Panc1 (cell line): ENCODE measurements at regions of chr9 and their contacts with region 1.

Region 1: DNA sequence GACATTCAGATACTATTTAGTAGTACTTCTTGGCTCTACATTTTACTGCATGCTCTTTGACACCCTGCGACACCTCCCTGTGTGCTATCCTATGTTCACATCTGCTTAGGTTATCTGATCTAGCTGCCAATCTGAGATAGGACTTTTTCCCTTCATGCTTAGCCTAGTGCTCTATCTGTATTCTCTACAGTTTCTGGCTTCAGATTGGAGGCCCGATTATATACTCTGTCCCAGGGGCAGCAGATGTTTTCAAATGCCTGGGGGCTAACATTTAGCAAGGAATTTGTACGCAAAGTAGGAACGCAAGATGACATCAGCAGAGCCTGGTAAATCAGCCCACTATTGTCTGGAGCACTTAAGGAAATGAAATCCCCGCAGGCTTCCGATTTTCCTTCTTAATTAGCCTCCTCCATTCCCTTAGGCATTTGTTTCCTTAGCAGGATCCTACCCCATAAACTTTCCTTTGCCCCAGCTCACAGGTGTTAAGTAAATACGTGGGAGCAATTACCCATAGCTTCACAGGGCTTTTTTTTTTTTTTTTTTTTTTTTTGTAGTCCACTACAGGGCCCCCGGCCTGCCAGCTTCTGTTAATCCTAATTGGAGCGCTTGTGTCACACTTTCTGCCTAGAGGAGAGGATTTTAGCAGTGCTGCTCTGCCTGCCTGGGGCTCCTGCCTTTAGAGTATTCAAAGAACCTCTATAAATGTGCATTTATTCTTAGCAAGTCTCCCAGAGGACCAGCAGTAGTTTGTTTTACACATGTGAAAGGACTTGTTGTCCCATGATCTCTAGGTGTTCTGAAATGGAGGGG is 61.1 kb upstream of the LPAR1 start:
- DNase-seq: no peak
- ATAC-seq: no peak
- H3K4me3 ChIP-seq: no peak overlapping the region
- H3K27ac ChIP-seq: no peak overlapping the region
- H3K4me1 ChIP-seq: no peaks in the 10 kb centered on the region
- H3K27me3 ChIP-seq: no peaks in the 10 kb centered on the region
- CTCF ChIP-seq: no peak

Region 2: DNA sequence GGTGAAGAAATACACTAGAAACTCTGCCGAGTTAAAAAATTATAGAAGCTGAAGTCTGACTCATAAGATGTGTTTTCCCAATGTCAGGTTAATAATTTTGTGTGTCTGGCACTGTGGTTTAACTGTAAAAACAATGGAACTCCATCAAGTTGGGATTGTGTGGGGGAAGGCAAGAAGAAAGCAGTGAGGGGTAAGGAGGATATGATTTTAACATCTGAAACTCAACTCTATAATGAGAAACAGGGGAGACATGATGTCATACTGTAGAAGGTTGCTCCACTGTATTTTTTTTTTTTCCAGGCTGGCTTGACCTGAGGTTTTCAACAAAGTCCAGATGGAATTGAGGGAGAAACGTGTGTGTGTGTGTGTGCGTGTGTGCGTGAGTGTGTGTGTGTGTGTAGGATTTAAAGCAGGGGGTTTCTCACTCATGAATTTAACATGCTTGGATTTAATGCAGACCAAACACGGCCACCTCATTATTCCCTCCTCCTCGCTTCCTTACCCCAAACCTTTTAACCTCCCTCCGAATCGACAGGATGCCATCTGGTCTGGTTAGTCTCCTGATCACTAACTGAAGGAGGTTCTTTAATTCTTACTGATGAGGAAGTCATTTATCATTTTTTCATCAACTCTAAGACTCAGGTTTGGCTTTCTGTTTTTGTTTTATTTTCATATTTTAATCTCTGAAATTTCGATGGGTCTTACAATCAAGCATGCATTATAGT is 79.1 kb after region 1 on chr9:
- CTCF ChIA-PET with region 1: no interaction called
- POLR2A ChIA-PET with region 1: interaction called, 10 read pairs
- in situ Hi-C with region 1: no loop called
- intact Hi-C with region 1: no loop called
- DNase-seq: no peak
- ATAC-seq: no peak
- H3K4me3 ChIP-seq: no peak overlapping the region
- H3K27ac ChIP-seq: no peak overlapping the region
- H3K4me1 ChIP-seq: no peaks in the 10 kb centered on the region
- H3K27me3 ChIP-seq: no peaks in the 10 kb centered on the region
- CTCF ChIP-seq: no peak